K562 (cell line): ENCODE measurements at regions of chr1 and their contacts with region 1.

Region 1: DNA sequence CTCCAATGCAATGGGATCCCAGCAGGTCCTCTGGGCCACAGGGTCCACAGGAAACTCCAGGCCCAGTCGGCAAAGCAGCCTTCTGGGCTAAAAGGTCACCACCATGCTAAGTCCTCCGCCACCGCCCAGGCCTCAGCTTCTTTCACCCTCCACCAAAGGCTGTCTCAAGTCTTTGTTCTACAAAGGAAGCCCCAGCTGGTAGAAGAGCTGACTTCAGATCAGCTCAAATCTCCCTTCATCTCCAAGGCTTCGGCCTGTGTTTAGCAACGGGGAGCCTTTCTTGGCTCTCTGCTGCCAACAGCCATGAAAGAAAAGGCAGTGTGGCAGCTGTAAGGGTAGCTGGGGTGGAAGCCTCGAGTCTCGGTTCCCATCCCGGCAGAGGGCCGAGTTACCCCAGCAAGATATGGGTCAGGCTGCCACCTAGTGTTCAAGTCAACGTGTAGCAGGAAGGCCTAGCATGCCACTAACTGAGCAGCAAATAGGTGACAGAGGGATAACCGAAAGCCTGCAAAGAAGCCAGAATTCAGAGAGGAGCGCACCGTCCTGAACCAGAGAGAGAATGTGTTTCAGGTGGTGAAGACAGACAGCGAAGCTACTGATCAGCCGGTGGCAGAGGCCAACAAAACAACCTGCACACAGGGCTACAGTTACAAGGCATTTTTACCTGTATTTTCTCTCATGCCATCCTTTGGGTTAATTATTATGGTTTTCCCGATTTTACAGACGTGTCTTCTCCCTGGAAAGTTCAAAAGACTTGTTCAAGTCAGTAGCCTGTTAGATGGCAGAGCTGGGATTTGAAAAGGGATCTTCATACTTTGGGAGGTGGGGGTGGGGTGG is 26.8 kb upstream of the CRNN start:
- DNase-seq: peak; percentile 68 to 83 (median 78)
- ATAC-seq: peak; percentile 99
- H3K4me3 ChIP-seq: no peak overlapping the region
- H3K27ac ChIP-seq: no peak overlapping the region
- H3K4me1 ChIP-seq: no peaks in the 10 kb centered on the region
- H3K27me3 ChIP-seq: peaks cover 0 to 7% of the 10 kb centered on the region in 2 experiments; a peak in 1 of 5 replicates
- CTCF ChIP-seq: peak; percentile 86 to 90 (median 88)
- EP300 ChIP-seq: no peak
- POLR2A ChIP-seq: no peak
- RAD21 ChIP-seq: peak; percentile 40 to 70; a peak in 3 of 4 replicates

Region 2: GRCh38 chr1:152227310-152227928 is 213.4 kb before region 1 on chr1:
- CTCF ChIA-PET with region 1: no interaction called
- POLR2A ChIA-PET with region 1: no interaction called
- in situ Hi-C with region 1: no loop called
- intact Hi-C with region 1: no loop called
- DNase-seq: peak in 1 of 4 experiments; percentile 4
- ATAC-seq: no peak
- H3K4me3 ChIP-seq: no peak overlapping the region
- H3K27ac ChIP-seq: no peak overlapping the region
- H3K4me1 ChIP-seq: no peaks in the 10 kb centered on the region
- H3K27me3 ChIP-seq: no peaks in the 10 kb centered on the region
- CTCF ChIP-seq: peak in 2 of 3 experiments; percentile 17 to 19; a peak in 2 of 6 replicates
- EP300 ChIP-seq: no peak
- POLR2A ChIP-seq: no peak
- RAD21 ChIP-seq: peak in 1 of 2 experiments; percentile 26; a peak in 1 of 4 replicates

Region 3: DNA sequence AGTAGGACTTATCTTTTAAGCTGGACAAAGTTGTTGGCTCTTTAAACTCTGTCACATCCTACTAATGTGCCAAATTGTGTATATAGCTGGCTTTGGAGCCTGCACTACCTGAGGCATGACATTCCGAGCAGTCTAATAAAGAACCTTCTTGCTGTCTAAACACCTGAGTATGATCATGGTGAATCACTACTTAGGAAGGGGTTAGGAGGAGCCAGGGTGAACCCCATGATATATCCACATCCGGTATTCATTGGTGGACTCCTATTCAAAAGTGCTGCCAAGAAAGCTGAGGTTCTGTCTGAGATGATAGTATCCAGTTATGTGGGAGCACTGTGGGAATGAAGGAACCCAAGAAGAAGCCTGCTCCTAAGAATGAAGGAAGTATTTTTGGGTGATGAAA is 53.9 kb before region 1 on chr1:
- CTCF ChIA-PET with region 1: no interaction called
- POLR2A ChIA-PET with region 1: no interaction called
- in situ Hi-C with region 1: no loop called
- intact Hi-C with region 1: no loop called
- DNase-seq: no peak
- ATAC-seq: no peak
- H3K4me3 ChIP-seq: no peak overlapping the region
- H3K27ac ChIP-seq: no peak overlapping the region
- H3K4me1 ChIP-seq: no peaks in the 10 kb centered on the region
- H3K27me3 ChIP-seq: no peaks in the 10 kb centered on the region
- CTCF ChIP-seq: no peak
- EP300 ChIP-seq: no peak
- POLR2A ChIP-seq: no peak
- RAD21 ChIP-seq: no peak

Region 4: GRCh38 chr1:152398812-152399698 is 41.8 kb before region 1 on chr1:
- CTCF ChIA-PET with region 1: interaction called, 3 read pairs
- POLR2A ChIA-PET with region 1: no interaction called
- in situ Hi-C with region 1: no loop called
- intact Hi-C with region 1: loop called (anchors 5 kb)
- DNase-seq: peak in 2 of 4 experiments; percentile 9 to 12
- ATAC-seq: peak; percentile 70
- H3K4me3 ChIP-seq: no peak overlapping the region
- H3K27ac ChIP-seq: no peak overlapping the region
- H3K4me1 ChIP-seq: no peaks in the 10 kb centered on the region
- H3K27me3 ChIP-seq: no peaks in the 10 kb centered on the region
- CTCF ChIP-seq: peak; percentile 28 to 45 (median 44); a peak in 2 of 6 replicates
- EP300 ChIP-seq: no peak
- POLR2A ChIP-seq: no peak
- RAD21 ChIP-seq: 0 out of 4 replicates have a peak, but pooled peaks of 1 of the 2 experiments have one; percentile 20